ENCODE measurements at regions of chr5 and their contacts with region 1.

Region 1: DNA sequence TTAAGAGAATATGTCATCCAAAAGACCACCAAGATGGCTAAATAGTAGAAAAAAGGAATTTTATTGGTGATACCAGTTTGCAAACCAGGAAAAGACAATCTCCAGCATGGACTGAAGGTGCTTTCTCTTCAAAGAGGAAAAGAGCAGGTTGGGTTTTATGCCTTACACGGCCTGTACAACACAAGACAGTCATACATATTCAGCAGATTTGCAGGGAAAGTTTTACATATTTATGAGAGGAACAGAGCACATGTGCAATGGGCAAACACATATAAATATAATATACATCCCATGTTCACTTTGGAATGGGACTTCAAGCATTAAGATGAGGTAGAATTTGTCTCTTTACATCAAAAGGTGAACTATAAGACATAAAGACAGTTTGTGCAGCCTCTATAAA is 70.3 kb upstream of the PPP2CA start:
- DNase-seq: no peak
- H3K4me3 ChIP-seq: no peak overlapping the region
- H3K27ac ChIP-seq: no peak overlapping the region
- H3K4me1 ChIP-seq: no peaks in the 10 kb centered on the region
- H3K27me3 ChIP-seq: no peaks in the 10 kb centered on the region
- CTCF ChIP-seq: no peak

Region 2: GRCh38 chr5:134585966-134586365 is 289.8 kb after region 1 on chr5:
- intact Hi-C with region 1: loop called (anchors 2 kb)
- DNase-seq: no peak
- H3K4me3 ChIP-seq: no peak overlapping the region
- H3K27ac ChIP-seq: no peak overlapping the region
- H3K4me1 ChIP-seq: peaks cover 0 to 22% (median 8%) of the 10 kb centered on the region in 4 donors
- H3K27me3 ChIP-seq: no peaks in the 10 kb centered on the region
- CTCF ChIP-seq: no peak